HEK293 (cell line): ENCODE measurements at regions of chr1 and their contacts with region 1.

Region 1: DNA sequence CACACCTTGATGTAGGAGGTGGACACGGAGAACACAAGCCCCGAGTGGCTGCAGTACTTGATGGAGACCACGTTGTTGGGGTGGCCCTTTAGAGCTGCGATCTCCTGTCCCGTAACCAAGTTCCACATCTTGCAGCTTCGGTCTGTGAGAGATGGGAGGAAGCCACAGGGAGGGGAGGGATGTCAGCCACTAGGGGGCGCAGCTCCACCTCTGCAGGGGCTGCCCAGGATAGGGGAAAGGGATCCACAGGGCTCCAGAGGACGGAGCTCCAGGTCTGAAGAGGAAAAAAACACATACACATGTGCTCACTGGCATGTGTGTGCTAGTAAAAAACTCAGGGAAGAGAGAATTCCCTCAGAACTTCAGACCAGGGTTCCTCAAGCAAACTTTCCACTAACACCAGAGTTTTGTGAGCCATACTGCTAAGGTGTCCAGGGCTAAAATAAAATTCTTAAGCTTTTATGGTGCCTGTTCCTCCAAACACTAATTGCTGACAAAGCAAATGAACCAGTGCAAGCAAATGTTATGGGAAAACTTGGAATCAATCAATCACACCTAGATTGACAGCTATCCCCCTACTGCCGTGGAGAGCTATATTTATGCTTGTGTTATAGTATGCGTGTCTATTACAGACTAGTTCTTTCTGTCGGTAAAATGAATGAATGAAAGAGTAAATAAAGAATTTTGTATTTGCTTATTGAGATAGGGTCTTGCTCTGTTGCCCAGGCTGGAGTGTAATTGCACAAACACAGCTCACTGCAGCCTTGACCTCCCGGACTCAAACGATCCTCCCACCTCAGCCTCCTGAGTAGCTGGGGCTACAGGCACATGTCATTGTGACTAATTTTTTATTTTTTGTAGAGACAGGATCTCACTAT is 43.7 kb downstream of the KIF21B start:
- H3K4me3 ChIP-seq: no peak overlapping the region
- H3K27ac ChIP-seq: no peak overlapping the region
- H3K4me1 ChIP-seq: no peaks in the 10 kb centered on the region
- CTCF ChIP-seq: peak; percentile 21; the same call in 1 of the 2 replicates

Region 2: DNA sequence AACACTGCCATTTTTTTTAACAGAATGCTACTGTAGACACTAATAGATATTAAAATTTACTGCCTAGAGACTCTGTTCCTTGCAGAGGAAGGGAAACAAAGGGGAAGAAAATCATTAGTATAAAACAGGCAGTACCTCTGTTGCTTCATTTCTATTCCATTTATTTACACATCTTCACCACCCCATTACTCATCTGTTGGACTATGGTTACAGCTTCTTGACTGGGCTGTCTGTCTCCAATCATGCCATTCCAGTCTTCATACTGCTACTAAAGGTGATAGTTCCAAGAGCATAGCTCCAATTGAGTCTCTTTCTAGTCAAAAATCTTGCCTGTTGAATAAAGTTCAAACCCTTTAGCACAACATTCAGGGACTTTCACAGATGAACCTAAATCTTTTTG is 129.3 kb before region 1 on chr1:
- CTCF ChIA-PET with region 1: no interaction called
- POLR2A ChIA-PET with region 1: no interaction called
- H3K4me3 ChIP-seq: no peak overlapping the region
- H3K27ac ChIP-seq: no peak overlapping the region
- H3K4me1 ChIP-seq: no peaks in the 10 kb centered on the region
- CTCF ChIP-seq: no peak

Region 3: GRCh38 chr1:200949626-200950025 is 30.2 kb before region 1 on chr1:
- CTCF ChIA-PET with region 1: no interaction called
- POLR2A ChIA-PET with region 1: no interaction called
- H3K4me3 ChIP-seq: no peak overlapping the region
- H3K27ac ChIP-seq: no peak overlapping the region
- H3K4me1 ChIP-seq: no peaks in the 10 kb centered on the region
- CTCF ChIP-seq: no peak

Region 4: GRCh38 chr1:201023517-201023902 is 43.7 kb after region 1 on chr1 and contains the start of gene KIF21B:
- CTCF ChIA-PET with region 1: interaction called, 18 read pairs
- POLR2A ChIA-PET with region 1: interaction called, 3 read pairs
- H3K4me3 ChIP-seq: peak within 1 kb of the TSS; percentile 46
- H3K27ac ChIP-seq: peak within 1 kb of the TSS; percentile 27; the same call in 1 of the 2 replicates
- H3K4me1 ChIP-seq: no peaks in the 10 kb centered on the region
- CTCF ChIP-seq: no peak

Region 5: GRCh38 chr1:201049248-201049831 is 69.5 kb after region 1 on chr1:
- CTCF ChIA-PET with region 1: interaction called, 108 read pairs
- POLR2A ChIA-PET with region 1: no interaction called
- H3K4me3 ChIP-seq: no peak overlapping the region
- H3K27ac ChIP-seq: no peak overlapping the region
- H3K4me1 ChIP-seq: no peaks in the 10 kb centered on the region
- CTCF ChIP-seq: no peak

Region 6: DNA sequence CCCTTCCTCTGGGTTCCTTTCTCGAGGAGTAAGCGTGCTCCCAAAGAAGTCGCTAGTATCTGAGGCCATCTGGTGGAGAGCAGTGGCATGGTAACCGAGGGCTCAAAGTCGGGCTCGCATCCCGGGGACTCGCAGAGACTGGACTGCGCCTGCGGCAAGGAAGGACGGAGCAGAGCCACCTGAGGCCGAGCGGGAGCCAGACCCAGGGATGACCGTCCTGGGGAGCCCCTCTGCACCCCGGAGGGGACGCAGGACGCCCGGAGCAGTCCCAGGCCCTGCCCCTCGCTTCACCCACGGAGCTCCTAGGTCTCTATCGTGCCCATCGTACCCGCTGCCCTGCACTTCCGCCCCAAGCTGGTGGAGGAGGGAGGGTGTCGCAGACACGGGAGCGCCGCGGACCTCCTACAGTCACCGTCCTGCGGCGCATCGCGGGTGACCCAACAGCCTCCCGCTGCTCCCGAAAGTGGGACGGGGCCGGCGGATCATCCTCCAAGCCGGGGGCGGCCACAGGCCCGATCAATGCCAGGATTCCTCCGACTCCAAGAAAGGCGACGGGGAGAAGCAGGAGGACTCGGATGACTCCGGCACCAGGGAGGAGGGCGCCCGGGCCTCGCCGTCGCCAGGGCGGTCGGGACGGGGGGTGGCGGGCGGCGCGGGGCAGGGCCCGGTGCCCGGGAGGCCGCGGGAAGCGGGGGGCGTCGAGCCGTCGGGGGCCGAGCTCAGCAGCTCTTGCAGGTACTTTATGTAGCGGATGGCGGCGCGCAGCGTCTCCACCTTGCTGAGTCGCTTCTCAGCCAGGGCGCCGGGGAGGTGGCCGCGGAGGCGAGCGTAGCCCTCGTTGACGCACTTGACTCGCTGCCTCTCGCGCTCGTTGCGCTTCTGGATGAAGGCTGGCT is 134.7 kb after region 1 on chr1:
- CTCF ChIA-PET with region 1: interaction called, 16 read pairs
- POLR2A ChIA-PET with region 1: interaction called, 3 read pairs
- H3K4me3 ChIP-seq: peak overlapping the region; percentile 71
- H3K27ac ChIP-seq: peak overlapping the region; percentile 32; the same call in 1 of the 2 replicates
- H3K4me1 ChIP-seq: no peaks in the 10 kb centered on the region
- CTCF ChIP-seq: peak; percentile 97